Activated naive CD4-positive, alpha-beta T cell treated with anti-CD3 and anti-CD28 coated beads for 36 hours (primary cell): ENCODE measurements at regions of chr2 and their contacts with region 1.

Region 1: DNA sequence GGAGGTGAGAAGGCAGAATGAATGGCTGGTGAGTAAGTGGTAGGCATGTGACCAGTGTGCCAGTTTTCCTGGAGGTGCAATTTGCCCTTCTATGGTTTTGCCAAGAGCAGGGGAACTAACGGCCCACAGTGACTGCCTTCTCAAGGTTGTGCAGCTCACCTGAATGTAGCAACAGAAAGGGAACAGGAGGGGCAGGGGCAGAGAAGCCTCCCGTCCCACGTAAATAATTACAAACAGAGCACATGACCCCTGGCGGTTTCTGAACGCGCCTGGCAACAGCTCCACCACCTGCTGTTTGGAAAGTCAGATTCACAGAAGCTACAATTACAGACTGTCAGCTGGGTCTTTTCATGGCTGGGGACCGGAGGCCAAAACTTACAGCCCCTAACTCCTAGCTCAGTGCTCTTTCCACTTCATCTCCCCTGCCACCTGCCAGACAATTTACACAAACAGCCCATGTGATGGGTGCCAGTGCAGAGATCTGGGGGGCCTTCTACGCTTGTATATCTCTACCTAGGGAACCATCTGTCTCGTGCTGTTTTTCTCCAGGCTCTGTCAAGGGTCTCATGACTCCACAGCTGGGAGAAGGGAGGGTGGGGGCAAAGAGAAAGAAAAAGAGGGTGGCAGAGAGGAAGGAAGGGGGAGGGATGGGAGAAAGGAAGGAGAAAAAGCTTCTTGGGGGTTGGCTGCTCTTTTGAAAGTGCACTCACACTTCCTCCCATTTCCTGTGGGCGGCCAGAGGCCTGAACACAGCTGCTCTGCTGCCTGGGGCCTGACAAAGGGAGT is 69.6 kb downstream of the POLR1A start:
- DNase-seq: peak; percentile 74
- H3K4me3 Mint-ChIP-seq: peak overlapping the region; percentile 58
- H3K27ac Mint-ChIP-seq: peak overlapping the region; percentile 95
- H3K4me1 Mint-ChIP-seq: peaks cover 81% of the 10 kb centered on the region
- H3K27me3 Mint-ChIP-seq: no peaks in the 10 kb centered on the region

Region 2: GRCh38 chr2:85826990-85827878 is 208.8 kb before region 1 on chr2:
- CTCF ChIA-PET with region 1: interaction called, 80 read pairs
- intact Hi-C with region 1: loop called (anchors 1 kb)
- DNase-seq: peak; percentile 88
- H3K4me3 Mint-ChIP-seq: peak overlapping the region; percentile 6
- H3K27ac Mint-ChIP-seq: no peak overlapping the region
- H3K4me1 Mint-ChIP-seq: peaks cover 11% of the 10 kb centered on the region
- H3K27me3 Mint-ChIP-seq: no peaks in the 10 kb centered on the region

Region 3: DNA sequence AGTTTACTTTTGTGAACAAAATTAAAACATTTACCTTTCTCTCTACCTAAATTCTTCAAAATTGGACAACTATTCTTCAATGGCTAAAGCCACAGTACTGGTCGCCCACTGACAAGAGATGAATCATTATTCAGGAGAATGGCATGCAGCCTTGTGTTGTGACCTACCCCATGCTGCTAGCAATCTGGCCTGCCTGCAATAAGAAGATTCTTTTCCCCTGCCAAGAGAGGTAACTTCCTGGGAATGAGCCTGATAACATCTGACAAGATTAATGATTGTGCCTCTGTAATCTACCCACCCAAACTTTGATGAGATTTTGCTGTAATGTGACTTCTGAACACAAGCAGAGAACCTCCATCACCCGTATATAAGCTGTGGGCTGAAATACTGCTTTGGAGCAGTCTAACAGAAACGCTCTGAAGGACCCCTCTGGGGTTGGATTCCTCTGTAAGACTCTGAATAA is 100.3 kb before region 1 on chr2:
- CTCF ChIA-PET with region 1: no interaction called
- intact Hi-C with region 1: loop called (anchors 2 kb)
- DNase-seq: no peak
- H3K4me3 Mint-ChIP-seq: no peak overlapping the region
- H3K27ac Mint-ChIP-seq: no peak overlapping the region
- H3K4me1 Mint-ChIP-seq: peaks cover 20% of the 10 kb centered on the region
- H3K27me3 Mint-ChIP-seq: no peaks in the 10 kb centered on the region

Region 4: GRCh38 chr2:86017901-86018896 is 17.9 kb before region 1 on chr2:
- CTCF ChIA-PET with region 1: interaction called, 3 read pairs
- intact Hi-C with region 1: loop called (anchors 1 kb)
- DNase-seq: no peak
- H3K4me3 Mint-ChIP-seq: no peak overlapping the region
- H3K27ac Mint-ChIP-seq: no peak overlapping the region
- H3K4me1 Mint-ChIP-seq: peaks cover 9% of the 10 kb centered on the region
- H3K27me3 Mint-ChIP-seq: no peaks in the 10 kb centered on the region

Region 5: DNA sequence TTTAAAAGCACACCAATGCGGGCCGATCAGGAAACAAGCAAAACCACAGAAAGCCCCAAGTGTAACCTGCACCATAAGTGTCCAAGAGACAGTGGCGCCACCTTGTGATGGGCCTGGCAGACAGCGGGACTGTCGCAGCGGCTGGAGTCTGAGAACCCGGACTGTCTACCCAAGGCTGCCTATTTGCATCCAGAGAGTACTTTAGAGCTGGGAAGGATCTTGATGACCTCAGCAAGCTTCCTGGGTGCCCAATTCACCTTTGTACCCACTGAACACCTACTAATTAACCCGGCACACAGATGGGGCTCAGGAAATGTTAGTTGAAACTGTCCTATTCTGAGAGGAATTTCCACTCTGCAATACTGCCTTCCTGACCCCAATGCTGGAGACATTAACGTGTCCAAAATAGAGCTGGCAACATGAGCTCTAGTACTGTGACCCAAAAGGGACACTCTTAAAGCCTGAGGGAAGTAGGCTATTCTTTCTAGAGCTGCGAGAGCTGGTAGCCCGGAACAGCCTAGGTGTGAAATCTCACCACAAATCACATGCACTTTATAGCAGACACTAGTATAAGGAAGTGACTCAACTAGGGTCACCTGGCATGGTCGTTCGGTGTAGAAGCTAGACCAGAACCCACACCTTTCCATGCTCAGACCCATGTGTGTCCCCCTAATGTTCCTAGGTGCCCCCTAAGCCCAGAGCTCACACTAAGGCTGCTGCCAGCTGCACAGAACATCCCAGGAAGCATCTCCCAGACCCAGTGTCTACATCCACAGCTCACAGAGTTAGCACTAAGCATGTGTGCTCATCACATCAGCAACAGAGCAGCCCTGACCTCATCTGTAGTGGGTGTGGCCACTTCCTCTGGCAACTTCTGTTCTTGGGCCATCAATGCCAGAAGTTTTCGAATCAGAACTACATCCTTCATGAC is 44.2 kb after region 1 on chr2:
- CTCF ChIA-PET with region 1: interaction called, 5 read pairs
- intact Hi-C with region 1: loop called (anchors 2 kb)
- DNase-seq: peak; percentile 91
- H3K4me3 Mint-ChIP-seq: no peak overlapping the region
- H3K27ac Mint-ChIP-seq: no peak overlapping the region
- H3K4me1 Mint-ChIP-seq: peaks cover 16% of the 10 kb centered on the region
- H3K27me3 Mint-ChIP-seq: no peaks in the 10 kb centered on the region